ENCODE measurements at regions of chr2 and their contacts with region 1.

Region 1: DNA sequence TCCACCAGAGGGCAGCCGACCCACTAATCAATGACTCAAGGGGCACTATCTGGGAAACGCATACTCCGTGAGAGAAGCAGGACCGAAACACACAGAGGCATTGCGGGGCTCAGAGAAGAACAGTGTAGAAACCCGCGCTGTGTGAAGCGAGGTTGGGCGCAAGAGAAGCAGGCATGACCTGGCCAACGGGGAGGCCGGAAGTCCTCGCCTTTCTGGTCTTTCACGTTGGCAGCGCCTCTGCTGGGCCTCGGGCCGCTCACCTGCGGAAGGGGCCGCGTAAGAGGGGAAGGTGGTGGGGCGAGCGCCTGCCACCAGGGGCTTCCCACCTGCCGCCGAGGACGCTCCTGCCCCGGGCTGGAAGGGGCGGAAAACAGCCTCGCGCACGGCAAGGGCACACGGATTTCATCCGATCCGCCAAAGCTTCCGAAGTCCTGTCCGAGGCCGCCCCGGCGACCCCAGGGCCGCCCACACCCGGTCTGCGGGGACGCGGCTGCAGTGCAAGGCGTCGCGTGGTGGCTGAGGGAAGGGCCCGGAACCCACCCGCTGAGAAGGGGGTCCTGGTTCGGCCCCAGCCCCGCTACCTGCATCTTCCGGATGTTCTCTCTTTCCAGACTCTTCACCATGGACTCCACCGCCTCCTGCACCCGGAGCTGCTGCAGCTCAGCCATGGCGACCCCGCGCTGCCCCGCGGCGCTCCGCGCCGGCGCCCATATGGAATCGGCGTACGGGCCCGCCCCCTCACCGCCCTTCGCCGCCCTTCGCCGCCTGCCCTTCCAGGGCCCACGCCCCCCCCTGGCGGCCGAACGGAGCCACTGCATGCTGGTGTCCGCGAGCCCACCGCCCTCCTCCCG is at the start of gene FAM136A:
- DNase-seq: peak; percentile 96
- ATAC-seq: peak; percentile 95
- total RNA-seq, gene FAM136A: 26.0 TPM

Region 2: GRCh38 chr2:70190418-70191243 is 110.9 kb before region 1 on chr2 and contains the start of gene C2orf42:
- intact Hi-C with region 1: loop called (anchors 5 kb)
- DNase-seq: peak; percentile 96
- ATAC-seq: peak; percentile 98
- total RNA-seq, gene C2orf42: 14.1 TPM

Region 3: GRCh38 chr2:70248181-70248847 is 53.3 kb before region 1 on chr2 and contains the start of gene TIA1:
- intact Hi-C with region 1: loop called (anchors 5 kb)
- DNase-seq: peak; percentile 100
- ATAC-seq: peak; percentile 99
- total RNA-seq, gene TIA1: 49.1 TPM

Region 4: GRCh38 chr2:70647873-70648481 is 346.4 kb after region 1 on chr2:
- intact Hi-C with region 1: loop called (anchors 1 kb)
- DNase-seq: no peak
- ATAC-seq: peak; percentile 48

Measured in Right ventricle myocardium inferior (tissue), 1 donor.